ENCODE measurements at regions of chr5 and their contacts with region 1.

Region 1: DNA sequence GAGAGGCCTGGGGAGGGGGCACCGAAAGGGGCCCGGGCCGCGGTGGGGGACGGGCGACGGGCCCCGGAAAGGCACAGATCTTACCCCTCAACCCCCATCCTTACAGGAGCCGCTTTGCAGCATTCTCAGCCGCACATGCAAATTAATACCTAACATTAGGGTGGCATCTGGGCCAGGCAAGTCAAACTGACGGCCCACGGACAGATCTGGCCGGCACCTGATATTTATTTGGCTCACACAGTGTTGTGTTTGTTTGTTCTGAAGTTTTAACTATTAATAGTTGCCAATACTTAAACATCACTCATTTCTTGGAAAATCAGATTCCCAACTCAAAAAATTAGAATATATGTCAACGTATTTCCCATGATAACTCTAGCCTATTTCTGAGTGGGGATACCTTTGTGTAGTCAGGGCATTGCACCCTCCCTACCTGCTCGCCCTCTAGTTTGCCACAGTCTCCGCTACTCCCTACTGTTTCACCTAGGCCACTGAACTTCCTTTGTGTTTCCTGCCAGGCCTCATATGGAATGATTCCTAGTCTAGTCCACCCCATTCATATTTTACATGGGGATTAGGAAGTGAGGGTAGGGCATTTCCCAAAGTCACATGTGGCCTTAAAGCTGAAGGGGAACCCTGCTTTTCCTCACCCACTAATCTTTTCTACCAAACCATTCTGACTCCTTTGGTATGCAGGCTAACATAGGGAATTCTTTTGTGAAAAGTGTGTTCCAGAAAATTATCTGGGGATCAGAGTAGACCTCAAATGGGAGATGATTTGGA is 71.9 kb upstream of the LARP1 start:
- DNase-seq: no peak
- H3K4me3 ChIP-seq: peak overlapping the region; percentile 56 to 59
- H3K27ac ChIP-seq: peak overlapping the region; percentile 76 to 82
- H3K4me1 ChIP-seq: peaks cover 0 to 19% (median 14%) of the 10 kb centered on the region in 4 donors
- H3K27me3 ChIP-seq: no peaks in the 10 kb centered on the region
- CTCF ChIP-seq: no peak

Region 2: GRCh38 chr5:154754460-154755360 is 71.4 kb after region 1 on chr5:
- intact Hi-C with region 1: loop called (anchors 2 kb)
- DNase-seq: peak; percentile 100
- H3K4me3 ChIP-seq: peak overlapping the region; percentile 93 to 98
- H3K27ac ChIP-seq: peak overlapping the region; percentile 95 to 98
- H3K4me1 ChIP-seq: peaks cover 0 to 40% (median 24%) of the 10 kb centered on the region in 4 donors
- H3K27me3 ChIP-seq: no peaks in the 10 kb centered on the region
- CTCF ChIP-seq: peak; percentile 27 to 55

Region 3: DNA sequence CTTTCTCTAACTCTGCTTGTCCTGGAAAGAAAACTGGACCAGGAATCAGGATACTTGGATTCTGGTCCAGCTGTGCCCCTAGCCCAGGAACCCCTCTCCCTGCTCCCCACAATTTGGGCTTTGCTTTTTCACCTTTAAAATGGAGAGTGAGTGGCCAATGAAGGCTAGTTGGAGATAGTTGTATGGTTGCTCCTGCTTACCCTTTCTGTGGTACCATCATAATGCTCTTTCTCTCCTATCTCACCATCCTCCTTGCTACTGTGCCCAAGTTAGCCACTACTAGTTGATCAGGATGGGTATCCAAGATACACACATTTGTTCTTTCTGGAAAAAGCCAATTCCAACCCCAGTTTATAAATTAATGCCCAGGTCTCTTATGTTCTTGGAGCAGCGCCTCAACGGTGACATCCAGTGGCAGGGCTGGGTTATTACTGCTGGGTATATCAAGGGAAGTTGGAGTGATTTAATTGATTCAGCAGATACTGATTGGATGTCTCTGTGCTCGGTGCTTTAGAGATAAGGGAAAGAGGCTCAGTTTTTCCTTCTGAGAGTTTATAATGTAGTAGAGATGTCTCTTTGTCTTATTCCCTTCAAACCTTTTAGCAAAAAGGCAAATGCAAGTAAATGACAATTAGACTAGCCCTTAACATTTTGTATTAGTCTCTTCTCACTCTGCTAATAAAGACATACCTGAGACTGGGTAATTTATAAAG is 128.5 kb after region 1 on chr5:
- intact Hi-C with region 1: loop called (anchors 10 kb)
- DNase-seq: peak; percentile 62 to 78
- H3K4me3 ChIP-seq: no peak overlapping the region
- H3K27ac ChIP-seq: no peak overlapping the region
- H3K4me1 ChIP-seq: peaks cover 0 to 3% (median 0%) of the 10 kb centered on the region in 4 donors
- H3K27me3 ChIP-seq: no peaks in the 10 kb centered on the region
- CTCF ChIP-seq: peak; percentile 78 to 90